Spleen (tissue), 13 donors: ENCODE measurements at regions of chr1 and their contacts with region 1.

Region 1: DNA sequence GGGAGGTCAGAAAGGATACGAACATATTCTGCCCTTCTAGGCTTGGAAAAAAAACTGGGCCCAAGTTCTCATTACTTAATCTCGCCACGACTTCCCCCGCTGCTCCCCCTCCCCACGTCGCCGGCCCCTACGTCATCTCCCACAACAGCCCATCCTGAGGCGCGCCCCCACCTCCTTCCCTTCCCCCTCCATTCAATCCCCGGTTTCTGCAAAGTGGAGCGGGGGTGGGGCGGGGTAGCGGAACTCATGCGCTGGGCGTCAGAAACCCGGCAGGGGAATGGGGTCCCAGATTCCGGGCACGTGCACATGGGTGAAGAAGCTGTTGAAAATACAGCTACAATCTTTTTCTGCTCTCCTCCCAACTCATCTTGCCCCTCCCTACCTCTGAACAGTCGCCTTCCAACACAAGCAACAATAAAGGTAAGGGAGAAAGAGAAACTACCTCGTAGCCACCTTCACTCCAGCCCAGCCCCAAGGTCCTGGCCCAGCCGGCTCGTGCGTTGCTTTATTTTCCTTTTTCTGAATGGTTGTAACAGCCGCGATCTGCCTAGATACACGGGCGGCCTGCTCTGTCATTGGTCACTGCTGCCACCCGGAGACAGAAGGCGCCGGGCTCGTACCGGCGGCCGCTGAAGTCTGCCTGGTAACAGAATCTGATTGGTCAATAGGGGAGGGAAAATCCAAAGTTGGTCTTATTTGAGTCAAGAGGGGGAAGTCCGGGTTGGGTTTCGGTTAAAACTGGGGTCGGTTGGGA is at the start of gene RFX5:
- DNase-seq: peak; percentile 97
- H3K4me3 ChIP-seq: peak within 1 kb of the TSS; percentile 53 to 88 (median 62)
- H3K27ac ChIP-seq: peak within 1 kb of the TSS; percentile 87 to 98 (median 94)
- H3K4me1 ChIP-seq: peaks cover 13 to 57% (median 41%) of the 10 kb centered on the region in 6 donors
- H3K27me3 ChIP-seq: no peaks in the 10 kb centered on the region
- CTCF ChIP-seq: peak in 1 of 11 experiments; percentile 37
- POLR2A ChIP-seq: peak in 2 of 3 donors; percentile 30 to 70
- total RNA-seq, gene RFX5: 75.9 to 96.1 (median 92.2) TPM

Region 2: GRCh38 chr1:151281969-151282882 is 64.7 kb before region 1 on chr1 and contains the start of gene ZNF687:
- intact Hi-C with region 1: loop called (anchors 10 kb)
- DNase-seq: peak; percentile 100
- H3K4me3 ChIP-seq: peak within 1 kb of the TSS; percentile 80 to 98 (median 90)
- H3K27ac ChIP-seq: peak within 1 kb of the TSS; percentile 95 to 99 (median 98)
- H3K4me1 ChIP-seq: peaks cover 13 to 69% (median 41%) of the 10 kb centered on the region in 6 donors
- H3K27me3 ChIP-seq: no peaks in the 10 kb centered on the region
- CTCF ChIP-seq: peak in 3 of 11 experiments; percentile 13 to 21 (median 18)
- POLR2A ChIP-seq: peak; percentile 29 to 85 (median 49)
- total RNA-seq, gene ZNF687: 27.3 to 46.6 (median 33.4) TPM

Region 3: DNA sequence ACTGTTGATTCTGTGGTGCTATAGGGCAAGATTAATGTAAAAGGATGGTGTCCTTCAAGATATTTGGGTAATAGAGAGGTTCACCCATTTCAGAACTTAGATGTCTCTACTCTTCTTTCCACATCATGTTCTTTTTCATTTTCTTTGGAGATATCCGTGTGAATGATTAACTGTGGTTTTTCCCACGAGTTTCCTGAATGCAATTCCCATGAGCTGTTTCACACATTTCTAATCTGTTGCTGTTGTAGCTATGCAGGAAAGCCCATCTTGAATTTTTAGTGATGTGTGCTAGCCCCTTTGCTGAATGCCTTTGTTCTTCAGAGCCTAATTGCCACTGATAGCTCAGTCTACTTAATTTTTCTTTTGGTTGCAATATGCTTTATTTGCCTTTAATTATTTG is 292.5 kb after region 1 on chr1:
- intact Hi-C with region 1: no loop called
- DNase-seq: no peak
- H3K4me3 ChIP-seq: no peak overlapping the region
- H3K27ac ChIP-seq: no peak overlapping the region
- H3K4me1 ChIP-seq: peaks cover 4 to 39% (median 14%) of the 10 kb centered on the region in 6 donors
- H3K27me3 ChIP-seq: no peaks in the 10 kb centered on the region
- CTCF ChIP-seq: no peak
- POLR2A ChIP-seq: no peak